ENCODE measurements at regions of chr1 and their contacts with region 1.

Region 1: GRCh38 chr1:114979278-114979891 is 50.2 kb upstream of the TSHB start:
- DNase-seq: peak; percentile 54
- H3K4me3 ChIP-seq: no peak overlapping the region
- H3K27ac ChIP-seq: no peak overlapping the region
- H3K4me1 ChIP-seq: no peaks in the 10 kb centered on the region
- H3K27me3 ChIP-seq: peaks cover 0 to 14% of the 10 kb centered on the region in 2 experiments
- CTCF ChIP-seq: peak; percentile 50 to 60
- POLR2A ChIP-seq: no peak

Region 2: DNA sequence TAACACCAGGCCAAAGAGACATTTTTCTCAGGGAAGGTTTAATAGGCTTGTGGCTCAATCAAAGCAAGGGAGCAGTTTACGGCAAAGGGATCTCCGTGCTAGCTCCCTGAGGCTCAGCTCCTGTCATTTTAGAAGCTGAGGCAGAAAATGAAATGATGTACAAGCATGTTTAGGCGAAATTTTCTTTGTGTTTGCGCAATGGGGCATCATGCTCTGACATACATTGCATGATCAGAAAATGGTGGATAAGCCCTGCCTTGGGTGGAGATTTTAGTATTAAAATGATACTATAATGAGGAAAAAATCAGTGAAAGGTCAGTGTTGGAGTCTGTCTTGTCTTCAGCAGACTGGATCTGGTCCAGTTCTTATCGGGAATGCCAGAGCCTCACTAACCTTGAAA is 30.4 kb before region 1 on chr1:
- CTCF ChIA-PET with region 1: no interaction called
- POLR2A ChIA-PET with region 1: no interaction called
- dilution Hi-C with region 1: no loop called
- intact Hi-C with region 1: no loop called
- DNase-seq: no peak
- H3K4me3 ChIP-seq: no peak overlapping the region
- H3K27ac ChIP-seq: no peak overlapping the region
- H3K4me1 ChIP-seq: no peaks in the 10 kb centered on the region
- H3K27me3 ChIP-seq: peaks cover 0 to 3% of the 10 kb centered on the region in 2 experiments
- CTCF ChIP-seq: no peak
- POLR2A ChIP-seq: no peak

Region 3: GRCh38 chr1:115041654-115042053 is 62.3 kb after region 1 on chr1:
- CTCF ChIA-PET with region 1: interaction called, 15 read pairs
- POLR2A ChIA-PET with region 1: no interaction called
- dilution Hi-C with region 1: no loop called
- intact Hi-C with region 1: no loop called
- DNase-seq: no peak
- H3K4me3 ChIP-seq: no peak overlapping the region
- H3K27ac ChIP-seq: no peak overlapping the region
- H3K4me1 ChIP-seq: no peaks in the 10 kb centered on the region
- H3K27me3 ChIP-seq: peaks cover 4 to 6% of the 10 kb centered on the region in 2 experiments
- CTCF ChIP-seq: peak in 1 of 2 donors; percentile 3
- POLR2A ChIP-seq: no peak

Measured in endothelial cell of umbilical vein (primary cell).